ENCODE measurements at regions of chr6 and their contacts with region 1.

Region 1: DNA sequence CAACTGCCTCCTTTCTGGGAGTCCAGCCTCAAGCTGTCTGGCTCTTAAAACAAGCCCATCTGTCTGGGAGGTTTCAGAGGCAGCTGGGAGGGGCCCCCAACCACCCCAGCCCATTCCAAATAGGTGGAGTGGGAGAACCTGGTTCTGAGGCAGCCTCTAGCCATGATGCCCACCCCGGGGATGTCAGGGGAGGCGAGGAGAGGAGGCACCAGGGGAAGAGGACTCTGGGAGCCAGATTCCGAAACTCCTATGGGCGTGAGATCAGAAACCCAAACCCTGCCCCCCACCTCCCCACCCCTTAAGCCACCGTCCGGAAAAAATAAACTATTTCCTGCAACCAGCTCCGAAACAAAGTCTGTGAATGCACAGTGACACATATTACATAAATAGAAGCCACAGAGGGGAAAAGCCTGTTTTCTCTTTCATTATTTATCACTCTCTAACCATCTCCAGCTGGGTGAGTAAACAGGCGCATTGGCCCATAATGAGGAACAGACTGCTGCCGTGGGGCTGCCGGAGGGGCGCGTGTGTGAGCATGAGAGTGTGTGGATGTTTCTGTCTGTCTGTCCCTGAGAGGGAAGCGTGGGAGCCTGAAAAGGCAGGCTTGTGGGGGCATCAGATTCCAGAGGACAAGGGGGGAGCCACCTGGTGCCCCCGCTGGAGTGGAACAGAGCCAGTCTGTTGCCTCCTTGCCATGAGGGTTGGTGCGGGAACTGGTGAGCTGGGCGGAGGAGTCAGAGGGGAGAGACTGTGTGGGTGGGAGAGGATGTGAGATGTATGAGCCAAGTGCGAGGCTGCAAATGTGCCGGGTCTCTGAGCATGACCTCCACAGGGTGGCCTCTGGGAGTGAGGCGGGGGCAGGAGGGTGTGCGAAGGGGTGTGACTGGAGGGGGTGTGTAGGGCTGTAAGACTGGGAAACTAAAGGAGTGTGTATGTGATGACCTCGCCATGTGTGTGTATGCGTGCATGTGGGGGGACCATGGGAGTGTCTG is 14.3 kb upstream of the FOXP4 start:
- DNase-seq: peak in 7 of 9 experiments; percentile 24 to 81 (median 63)
- ATAC-seq: peak; percentile 80
- H3K4me3 ChIP-seq: peak overlapping the region; percentile 44 to 48
- H3K4me3 Mint-ChIP-seq: peak overlapping the region; percentile 81
- H3K27ac ChIP-seq: peak overlapping the region; percentile 2 to 36
- H3K27ac Mint-ChIP-seq: peak overlapping the region; percentile 87
- H3K4me1 ChIP-seq: peaks cover 25% of the 10 kb centered on the region
- H3K4me1 Mint-ChIP-seq: peaks cover 29% of the 10 kb centered on the region
- H3K27me3 ChIP-seq: no peaks in the 10 kb centered on the region
- H3K27me3 Mint-ChIP-seq: peaks cover 11% of the 10 kb centered on the region
- CTCF ChIP-seq: no peak

Region 2: DNA sequence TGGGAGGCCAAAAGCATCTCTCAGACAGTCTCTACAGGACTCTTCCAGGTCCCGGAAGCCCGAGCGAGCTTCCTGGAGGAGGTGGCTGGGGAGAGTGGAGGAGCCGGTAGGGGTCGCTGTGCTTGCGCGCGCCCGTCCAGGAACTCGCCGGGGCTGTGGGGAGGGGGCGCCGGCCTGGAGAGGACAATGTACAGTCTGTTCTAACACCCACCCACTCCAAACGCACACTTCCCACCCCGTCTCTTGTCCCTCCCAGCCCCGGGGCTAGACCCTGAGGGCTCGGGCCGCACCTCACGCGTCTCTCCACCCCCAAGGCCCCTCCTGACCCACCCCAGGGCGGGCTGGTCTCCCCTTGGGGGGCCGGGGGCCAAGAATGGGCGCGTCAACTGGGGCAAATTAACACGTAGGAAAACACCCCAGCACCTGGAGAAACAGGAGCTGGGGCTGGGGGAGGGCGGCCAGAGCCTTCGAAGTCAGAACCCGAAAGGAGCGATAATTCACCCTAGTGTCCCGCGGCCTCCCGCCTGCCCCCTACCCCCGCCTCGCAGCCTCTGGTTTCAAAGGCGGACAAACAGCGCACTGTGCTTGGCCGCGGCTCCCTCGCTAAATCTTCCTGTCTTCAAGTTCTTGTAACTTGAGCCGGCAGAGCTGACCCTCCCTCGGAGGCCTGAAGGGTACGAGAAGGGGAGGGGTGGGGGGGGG is 88.9 kb before region 1 on chr6:
- CTCF ChIA-PET with region 1: no interaction called
- POLR2A ChIA-PET with region 1: no interaction called
- intact Hi-C with region 1: no loop called
- DNase-seq: peak in 3 of 9 experiments; percentile 23 to 49 (median 34)
- ATAC-seq: no peak
- H3K4me3 ChIP-seq: no peak overlapping the region
- H3K4me3 Mint-ChIP-seq: peak overlapping the region; percentile 22
- H3K27ac ChIP-seq: no peak overlapping the region
- H3K27ac Mint-ChIP-seq: no peak overlapping the region
- H3K4me1 ChIP-seq: peaks cover 50% of the 10 kb centered on the region
- H3K4me1 Mint-ChIP-seq: peaks cover 47% of the 10 kb centered on the region
- H3K27me3 ChIP-seq: peaks cover 0 to 23% of the 10 kb centered on the region in 2 experiments
- H3K27me3 Mint-ChIP-seq: peaks cover 13% of the 10 kb centered on the region
- CTCF ChIP-seq: peak; percentile 34

Region 3: DNA sequence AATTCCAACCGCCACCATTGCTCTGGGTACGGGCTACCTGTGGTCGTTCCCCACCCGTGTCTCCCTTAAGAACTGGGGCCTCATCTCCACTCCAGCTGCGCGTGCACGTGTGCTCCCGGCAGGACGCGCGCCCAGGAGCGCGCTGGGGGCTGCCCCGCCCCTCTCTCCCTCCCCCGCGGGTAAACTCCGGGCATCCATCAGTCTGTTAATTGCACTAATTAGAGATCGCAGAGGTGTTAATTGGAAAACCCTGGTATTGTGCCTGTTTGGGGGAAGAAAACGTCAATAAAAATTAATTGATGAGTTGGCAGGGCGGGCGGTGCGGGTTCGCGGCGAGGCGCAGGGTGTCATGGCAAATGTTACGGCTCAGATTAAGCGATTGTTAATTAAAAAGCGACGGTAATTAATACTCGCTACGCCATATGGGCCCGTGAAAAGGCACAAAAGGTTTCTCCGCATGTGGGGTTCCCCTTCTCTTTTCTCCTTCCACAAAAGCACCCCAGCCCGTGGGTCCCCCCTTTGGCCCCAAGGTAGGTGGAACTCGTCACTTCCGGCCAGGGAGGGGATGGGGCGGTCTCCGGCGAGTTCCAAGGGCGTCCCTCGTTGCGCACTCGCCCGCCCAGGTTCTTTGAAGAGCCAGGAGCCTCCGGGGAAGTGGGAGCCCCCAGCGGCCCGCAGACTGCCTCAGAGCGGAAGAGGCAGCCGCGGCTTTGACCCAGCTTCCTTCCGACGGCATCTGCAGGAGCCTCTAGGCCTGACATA is 28.7 kb after region 1 on chr6:
- CTCF ChIA-PET with region 1: no interaction called
- POLR2A ChIA-PET with region 1: no interaction called
- intact Hi-C with region 1: loop called in 1 of 2 experiments (anchors 1 kb)
- DNase-seq: peak; percentile 67 to 97 (median 85)
- ATAC-seq: peak; percentile 93
- H3K4me3 ChIP-seq: peak overlapping the region; percentile 49 to 53
- H3K4me3 Mint-ChIP-seq: peak overlapping the region; percentile 85
- H3K27ac ChIP-seq: peak overlapping the region; percentile 32 to 41
- H3K27ac Mint-ChIP-seq: peak overlapping the region; percentile 86
- H3K4me1 ChIP-seq: peaks cover 20% of the 10 kb centered on the region
- H3K4me1 Mint-ChIP-seq: peaks cover 29% of the 10 kb centered on the region
- H3K27me3 ChIP-seq: no peaks in the 10 kb centered on the region
- H3K27me3 Mint-ChIP-seq: peaks cover 12% of the 10 kb centered on the region
- CTCF ChIP-seq: no peak

Region 4: DNA sequence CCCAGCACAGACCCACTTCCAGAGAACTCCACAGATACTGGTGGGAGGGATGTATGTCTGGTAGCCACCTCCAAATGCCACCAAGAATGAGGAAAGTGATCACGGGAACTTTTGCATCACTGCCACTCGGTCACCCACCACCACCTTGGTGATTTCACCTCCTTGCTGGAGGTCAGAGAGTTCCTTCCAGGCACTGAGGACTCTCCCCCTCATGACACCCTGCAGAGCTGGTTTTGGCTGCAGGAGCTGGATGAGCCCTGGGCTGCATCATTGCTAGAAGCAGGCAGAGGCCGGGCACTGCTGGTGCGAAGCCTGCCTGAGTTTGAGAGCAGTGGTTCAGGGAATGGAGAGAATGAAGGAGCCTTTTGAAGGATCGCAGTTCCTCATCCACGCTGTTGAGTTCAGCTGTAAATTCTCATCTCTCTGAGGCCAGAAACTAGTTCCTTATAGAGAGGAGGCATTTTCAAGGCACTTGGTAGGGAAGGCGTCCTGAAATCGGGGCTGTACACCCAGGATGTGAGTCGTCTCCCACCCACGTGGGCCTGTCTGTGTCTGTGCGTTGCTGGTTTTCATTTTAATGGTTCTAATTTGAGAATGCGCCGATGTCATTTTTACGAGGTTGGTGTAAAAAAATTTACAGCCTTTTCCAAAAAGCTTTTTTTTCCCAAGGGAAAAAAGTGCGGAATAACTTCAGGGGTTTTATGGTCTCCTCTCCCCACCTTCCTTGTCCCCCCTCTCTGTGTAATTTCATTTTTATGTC is 39.3 kb after region 1 on chr6:
- CTCF ChIA-PET with region 1: no interaction called
- POLR2A ChIA-PET with region 1: no interaction called
- intact Hi-C with region 1: loop called in 1 of 2 experiments (anchors 5 kb)
- DNase-seq: no peak
- ATAC-seq: no peak
- H3K4me3 ChIP-seq: no peak overlapping the region
- H3K4me3 Mint-ChIP-seq: no peak overlapping the region
- H3K27ac ChIP-seq: no peak overlapping the region
- H3K27ac Mint-ChIP-seq: no peak overlapping the region
- H3K4me1 ChIP-seq: no peaks in the 10 kb centered on the region
- H3K4me1 Mint-ChIP-seq: no peaks in the 10 kb centered on the region
- H3K27me3 ChIP-seq: no peaks in the 10 kb centered on the region
- H3K27me3 Mint-ChIP-seq: no peaks in the 10 kb centered on the region
- CTCF ChIP-seq: no peak

Measured in CD8-positive, alpha-beta T cell (primary cell).